CD4-positive, alpha-beta memory T cell (primary cell): ENCODE measurements at regions of chr20 and their contacts with region 1.

Region 1: DNA sequence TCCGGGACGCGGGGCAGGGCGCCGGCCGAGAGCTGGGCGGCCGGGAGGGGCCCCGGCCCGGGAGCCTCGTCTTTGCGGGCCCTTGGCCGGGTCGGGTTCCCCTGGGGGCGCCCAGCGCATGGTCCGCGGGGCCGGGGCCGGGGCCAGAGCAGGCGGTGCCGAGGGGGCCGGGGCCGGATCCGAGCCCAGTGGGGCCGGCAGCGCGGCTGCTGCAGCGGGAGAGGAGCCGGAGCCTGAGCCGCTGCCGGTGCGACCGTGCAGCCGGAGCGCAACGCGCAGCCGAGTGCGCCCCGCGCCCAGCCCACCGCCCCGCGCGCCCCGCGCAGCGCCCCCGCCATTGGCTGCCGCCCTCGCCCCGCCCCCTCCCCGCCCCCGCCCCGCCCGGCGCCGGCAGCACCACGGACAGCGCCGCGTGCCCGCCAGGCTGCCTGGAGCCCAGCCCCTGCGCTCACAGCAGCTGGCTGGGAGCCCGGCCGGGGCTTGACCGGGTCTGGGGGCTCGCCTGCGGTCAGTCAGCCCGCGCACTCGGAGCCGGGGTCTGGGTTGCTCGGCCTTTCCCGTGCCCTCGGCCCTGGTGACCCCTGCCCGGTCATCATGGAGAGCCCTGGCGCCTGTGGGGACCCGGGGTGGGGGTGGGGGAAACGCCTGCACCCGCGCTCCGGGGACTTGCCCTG is at the start of gene HRH3:
- DNase-seq: peak; percentile 38 to 55 (median 44)
- H3K4me3 ChIP-seq: no peak within 1 kb of the TSS
- H3K4me3 Mint-ChIP-seq: peak within 1 kb of the TSS in 6 of 8 donors; percentile 21 to 72 (median 60)
- H3K27ac ChIP-seq: no peak within 1 kb of the TSS
- H3K27ac Mint-ChIP-seq: peak within 1 kb of the TSS in 1 of 7 donors; percentile 83
- H3K4me1 ChIP-seq: no peaks in the 10 kb centered on the region
- H3K4me1 Mint-ChIP-seq: peaks cover 0 to 3% (median under 1%) of the 10 kb centered on the region in 4 donors
- H3K27me3 ChIP-seq: peaks cover 22% of the 10 kb centered on the region
- H3K27me3 Mint-ChIP-seq: peaks cover 19 to 31% of the 10 kb centered on the region in 2 donors
- total RNA-seq, gene HRH3: not detected

Region 2: DNA sequence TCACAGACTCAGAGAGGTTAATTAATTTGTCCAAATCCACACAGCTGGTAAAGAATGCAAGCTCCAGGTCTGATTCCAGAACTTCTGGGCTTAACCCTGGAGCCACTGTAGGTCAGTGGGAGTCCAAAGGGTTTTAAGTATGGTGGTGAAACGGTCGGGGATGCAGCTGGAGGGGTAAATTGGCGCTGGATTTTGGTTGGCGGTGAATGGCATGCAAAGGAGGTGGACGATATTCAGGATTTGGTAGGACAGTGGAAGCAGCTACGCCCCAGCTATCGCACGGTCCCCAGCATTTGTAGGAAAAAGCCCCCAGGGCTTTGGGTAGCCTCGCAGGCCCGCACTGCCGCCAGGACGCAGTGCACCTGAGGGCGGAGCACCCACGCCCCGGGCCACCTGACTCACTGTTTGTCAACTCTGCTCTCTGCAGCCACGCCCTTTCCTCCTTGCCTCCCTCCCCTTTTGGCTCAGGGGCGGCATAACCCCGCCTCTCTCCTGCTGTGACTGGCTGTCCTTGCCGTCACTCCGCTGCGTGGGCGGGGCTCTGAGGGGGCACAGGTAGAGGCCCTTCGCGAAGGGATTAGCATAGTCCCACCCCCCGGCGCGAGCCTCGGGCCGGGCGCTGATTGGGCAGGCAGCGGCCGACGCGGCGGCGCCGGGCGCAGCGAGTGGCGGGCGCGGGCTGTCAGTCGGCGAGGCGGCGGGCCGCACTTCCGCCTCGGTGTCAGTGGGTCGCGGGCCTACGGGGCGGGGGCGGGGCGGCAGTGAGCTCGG is 17.9 kb after region 1 on chr20 and contains the start of gene OSBPL2:
- CTCF ChIA-PET with region 1: no interaction called
- POLR2A ChIA-PET with region 1: no interaction called
- intact Hi-C with region 1: loop called (anchors 1 kb)
- DNase-seq: peak; percentile 100
- H3K4me3 ChIP-seq: peak within 1 kb of the TSS; percentile 62 to 65
- H3K4me3 Mint-ChIP-seq: peak within 1 kb of the TSS; percentile 82 to 88 (median 86)
- H3K27ac ChIP-seq: peak within 1 kb of the TSS; percentile 69
- H3K27ac Mint-ChIP-seq: peak within 1 kb of the TSS; percentile 84 to 97 (median 95)
- H3K4me1 ChIP-seq: peaks cover 38% of the 10 kb centered on the region
- H3K4me1 Mint-ChIP-seq: peaks cover 26 to 51% (median 39%) of the 10 kb centered on the region in 4 donors
- H3K27me3 ChIP-seq: no peaks in the 10 kb centered on the region
- H3K27me3 Mint-ChIP-seq: peaks cover 0 to 7% of the 10 kb centered on the region in 2 donors
- total RNA-seq, gene OSBPL2: 76.2 to 84.4 TPM